ENCODE measurements at regions of chr15 and their contacts with region 1.

Region 1: GRCh38 chr15:36883713-36884517 is 216.4 kb downstream of the MEIS2 start:
- DNase-seq: peak; percentile 90
- H3K4me3 ChIP-seq: peak overlapping the region; percentile 28 to 46; a peak in 3 of 4 replicates
- H3K27ac ChIP-seq: peak overlapping the region; percentile 1 to 68; a peak in 2 of 4 replicates
- H3K4me1 ChIP-seq: peaks cover 0 to 17% of the 10 kb centered on the region in 2 experiments; a peak in 2 of 4 replicates
- H3K27me3 ChIP-seq: no peaks in the 10 kb centered on the region
- CTCF ChIP-seq: peak; percentile 89
- EP300 ChIP-seq: no peak
- RAD21 ChIP-seq: peak; percentile 88

Region 2: GRCh38 chr15:37891766-37892368 is 1008.0 kb after region 1 on chr15:
- CTCF ChIA-PET with region 1: interaction called, 14 read pairs
- POLR2A ChIA-PET with region 1: no interaction called
- DNase-seq: peak; percentile 40
- H3K4me3 ChIP-seq: no peak overlapping the region; a peak in 1 of 4 replicates
- H3K27ac ChIP-seq: peak overlapping the region in 1 of 2 experiments; percentile 34; a peak in 2 of 4 replicates
- H3K4me1 ChIP-seq: peaks cover 0 to 2% of the 10 kb centered on the region in 2 experiments; a peak in 2 of 4 replicates
- H3K27me3 ChIP-seq: no peaks in the 10 kb centered on the region
- CTCF ChIP-seq: peak; percentile 92
- EP300 ChIP-seq: no peak
- RAD21 ChIP-seq: peak; percentile 98